ENCODE measurements at regions of chr11 and their contacts with region 1.

Region 1: DNA sequence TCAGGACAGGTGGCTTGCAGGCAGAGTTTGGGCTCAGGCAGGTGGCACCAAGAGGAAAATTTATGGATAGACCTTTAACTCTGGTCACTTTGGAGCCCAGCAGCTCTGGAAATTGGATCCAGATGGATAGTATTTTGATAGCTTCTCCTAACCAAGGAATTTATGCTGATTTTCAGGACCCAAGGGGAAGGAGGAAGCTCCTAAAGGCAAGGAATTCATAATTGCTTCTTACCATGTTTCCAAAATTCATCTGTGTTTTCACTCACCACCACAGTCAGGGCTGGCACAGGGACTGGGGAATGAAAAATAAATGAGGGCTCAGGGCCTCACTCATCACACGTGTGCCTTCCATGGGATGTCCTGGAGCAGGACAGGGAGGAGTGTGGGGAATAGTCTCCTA is 317.8 kb downstream of the ST3GAL4 start:
- DNase-seq: no peak
- ATAC-seq: no peak
- H3K4me3 ChIP-seq: no peak overlapping the region
- H3K4me3 Mint-ChIP-seq: no peak overlapping the region
- H3K27ac ChIP-seq: no peak overlapping the region
- H3K27ac Mint-ChIP-seq: no peak overlapping the region
- H3K4me1 ChIP-seq: no peaks in the 10 kb centered on the region
- H3K4me1 Mint-ChIP-seq: no peaks in the 10 kb centered on the region
- H3K27me3 ChIP-seq: no peaks in the 10 kb centered on the region
- H3K27me3 Mint-ChIP-seq: peaks cover 22 to 31% of the 10 kb centered on the region in 2 donors
- CTCF ChIP-seq: no peak

Region 2: DNA sequence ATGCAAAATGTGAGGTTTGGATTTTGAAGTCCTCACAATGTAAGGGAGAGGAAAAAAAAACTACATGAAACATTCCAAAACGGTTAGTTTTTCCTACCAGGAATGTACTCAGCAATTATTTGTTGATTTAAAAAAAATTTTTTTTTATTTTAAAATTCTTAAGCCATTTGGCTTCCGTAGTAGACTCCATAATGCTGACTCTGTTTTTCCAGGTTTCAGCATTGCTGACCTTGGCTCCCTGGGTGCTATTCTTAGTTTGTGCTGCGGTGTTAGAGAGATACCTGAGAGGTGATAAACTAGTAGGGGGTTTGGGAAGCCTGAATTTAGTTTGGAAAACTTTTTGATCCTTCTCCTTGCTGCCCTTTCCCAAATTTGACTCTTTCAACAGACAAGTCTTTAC is 1070.1 kb before region 1 on chr11:
- intact Hi-C with region 1: no loop called
- DNase-seq: no peak
- ATAC-seq: no peak
- H3K4me3 ChIP-seq: no peak overlapping the region
- H3K4me3 Mint-ChIP-seq: no peak overlapping the region
- H3K27ac ChIP-seq: no peak overlapping the region
- H3K27ac Mint-ChIP-seq: no peak overlapping the region
- H3K4me1 ChIP-seq: no peaks in the 10 kb centered on the region
- H3K4me1 Mint-ChIP-seq: no peaks in the 10 kb centered on the region
- H3K27me3 ChIP-seq: no peaks in the 10 kb centered on the region
- H3K27me3 Mint-ChIP-seq: no peaks in the 10 kb centered on the region
- CTCF ChIP-seq: no peak

Region 3: DNA sequence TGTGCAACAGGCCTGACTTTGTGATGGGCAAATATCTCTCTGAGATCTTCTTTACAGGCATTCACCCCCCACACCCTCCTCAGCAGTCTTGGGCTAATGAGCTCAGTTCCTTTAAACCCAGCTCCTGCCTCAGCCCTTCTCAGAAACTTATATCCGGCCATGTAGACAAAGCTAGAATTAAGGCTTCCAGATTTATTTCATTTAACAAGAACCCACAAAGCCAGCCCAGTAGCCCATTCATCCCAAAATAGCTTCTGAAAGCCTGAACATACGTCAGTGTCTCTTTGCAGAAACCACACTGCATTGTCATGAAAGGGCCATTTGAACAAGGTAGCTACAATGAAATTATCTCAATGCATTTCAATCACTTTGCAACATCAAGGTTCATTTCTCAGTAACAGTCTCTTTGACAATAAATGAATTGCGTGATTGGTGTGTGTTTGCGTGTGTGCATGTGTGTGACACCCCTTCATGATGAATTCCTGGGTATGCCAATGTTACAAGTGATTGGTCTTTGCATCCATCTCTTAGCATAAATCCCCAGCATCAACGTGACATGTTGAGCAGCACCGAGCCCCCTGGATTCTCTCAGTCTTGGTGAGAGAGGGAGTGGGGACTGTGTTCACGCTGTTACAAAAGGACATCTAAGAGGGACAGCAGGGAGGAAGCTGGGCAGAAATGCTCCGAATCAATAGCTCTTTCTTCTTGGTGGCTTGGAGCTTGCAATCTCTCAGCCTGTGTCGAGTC is 27.6 kb after region 1 on chr11:
- intact Hi-C with region 1: no loop called
- DNase-seq: no peak
- ATAC-seq: no peak
- H3K4me3 ChIP-seq: no peak overlapping the region
- H3K4me3 Mint-ChIP-seq: no peak overlapping the region
- H3K27ac ChIP-seq: no peak overlapping the region
- H3K27ac Mint-ChIP-seq: no peak overlapping the region
- H3K4me1 ChIP-seq: no peaks in the 10 kb centered on the region
- H3K4me1 Mint-ChIP-seq: no peaks in the 10 kb centered on the region
- H3K27me3 ChIP-seq: no peaks in the 10 kb centered on the region
- H3K27me3 Mint-ChIP-seq: peaks cover 12 to 15% of the 10 kb centered on the region in 2 donors
- CTCF ChIP-seq: no peak

Region 4: DNA sequence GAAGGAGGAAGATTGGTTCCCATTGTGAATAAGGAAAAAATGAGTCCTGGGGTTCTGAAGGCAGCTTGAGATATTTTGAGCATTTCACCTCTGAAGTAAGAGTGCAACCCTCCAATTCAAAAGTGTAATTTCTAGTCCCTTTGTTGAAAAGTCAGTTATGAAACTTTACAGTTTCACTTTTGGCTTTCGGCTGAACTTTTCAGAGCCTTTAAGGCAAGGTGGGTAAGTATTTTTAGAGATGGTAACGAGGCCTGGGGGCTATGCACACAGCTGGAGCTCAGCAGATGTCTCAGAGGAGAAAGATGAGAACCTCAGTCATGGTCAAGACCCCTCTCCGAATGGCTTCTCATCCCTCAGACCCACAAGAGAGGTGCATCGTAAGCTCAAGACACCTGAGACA is 59.7 kb after region 1 on chr11:
- intact Hi-C with region 1: loop called (anchors 10 kb)
- DNase-seq: no peak
- ATAC-seq: no peak
- H3K4me3 ChIP-seq: no peak overlapping the region
- H3K4me3 Mint-ChIP-seq: peak overlapping the region; percentile 53
- H3K27ac ChIP-seq: no peak overlapping the region
- H3K27ac Mint-ChIP-seq: peak overlapping the region; percentile 60 to 68
- H3K4me1 ChIP-seq: peaks cover 40% of the 10 kb centered on the region
- H3K4me1 Mint-ChIP-seq: peaks cover 44 to 45% of the 10 kb centered on the region in 2 donors
- H3K27me3 ChIP-seq: no peaks in the 10 kb centered on the region
- H3K27me3 Mint-ChIP-seq: no peaks in the 10 kb centered on the region
- CTCF ChIP-seq: no peak